Tibial artery (tissue), 4 donors: ENCODE measurements at regions of chr6 and their contacts with region 1.

Region 1: GRCh38 chr6:35240840-35241801 is 18.4 kb upstream of the ZNF76 start:
- DNase-seq: peak; percentile 59 to 83
- H3K4me3 ChIP-seq: no peak overlapping the region
- H3K27ac ChIP-seq: peak overlapping the region; percentile 68 to 80
- H3K4me1 ChIP-seq: peaks cover 0 to 46% (median 31%) of the 10 kb centered on the region in 4 donors
- H3K27me3 ChIP-seq: no peaks in the 10 kb centered on the region
- CTCF ChIP-seq: peak; percentile 94 to 95

Region 2: DNA sequence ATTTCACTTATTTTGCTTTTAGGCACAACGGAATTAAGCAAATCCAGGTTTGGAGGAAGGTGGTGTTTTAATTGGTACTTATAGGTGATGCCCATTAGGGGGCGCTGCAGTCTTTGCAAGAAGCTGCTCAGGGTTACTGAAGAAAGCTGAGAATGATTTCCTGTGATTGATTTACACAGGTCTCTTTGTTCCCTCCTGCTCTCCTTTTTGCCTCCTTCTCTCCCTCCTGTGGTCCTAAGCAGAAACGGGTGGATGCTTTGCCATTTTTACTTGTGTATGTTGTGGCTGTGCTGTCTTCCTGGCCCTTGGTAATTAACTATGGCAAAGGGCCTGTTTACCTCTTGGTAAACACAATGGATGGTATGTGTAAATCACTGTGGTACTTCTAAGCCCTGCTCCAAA is 254.3 kb before region 1 on chr6:
- intact Hi-C with region 1: loop called (anchors 10 kb)
- DNase-seq: peak; percentile 38 to 78
- H3K4me3 ChIP-seq: no peak overlapping the region
- H3K27ac ChIP-seq: no peak overlapping the region
- H3K4me1 ChIP-seq: peaks cover 0 to 11% (median 0%) of the 10 kb centered on the region in 4 donors
- H3K27me3 ChIP-seq: no peaks in the 10 kb centered on the region
- CTCF ChIP-seq: peak; percentile 76 to 92

Region 3: DNA sequence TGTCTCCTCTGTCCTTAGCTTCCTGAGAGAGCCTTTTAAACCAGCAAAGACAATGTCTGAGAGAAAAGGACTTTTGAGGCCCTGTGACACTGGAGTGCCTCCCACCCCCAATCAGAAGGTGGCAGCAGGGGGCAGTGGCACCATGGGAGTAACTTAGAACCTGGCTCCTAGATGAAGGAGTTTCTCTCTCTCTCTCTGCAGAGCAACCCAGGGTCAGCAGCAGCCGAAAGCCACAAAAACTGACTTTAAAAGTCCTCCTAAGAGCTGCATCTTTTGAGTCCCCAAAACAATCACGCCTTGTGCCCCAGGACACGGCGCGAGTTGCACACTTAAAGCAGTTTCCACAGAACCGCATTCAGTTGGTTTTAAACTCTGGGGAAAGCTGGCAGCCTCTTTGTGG is 94.7 kb before region 1 on chr6:
- intact Hi-C with region 1: loop called (anchors 2 kb)
- DNase-seq: peak; percentile 41 to 80
- H3K4me3 ChIP-seq: no peak overlapping the region
- H3K27ac ChIP-seq: peak overlapping the region in 1 of 2 donors; percentile 29
- H3K4me1 ChIP-seq: peaks cover 0 to 29% (median 14%) of the 10 kb centered on the region in 4 donors
- H3K27me3 ChIP-seq: no peaks in the 10 kb centered on the region
- CTCF ChIP-seq: peak; percentile 79 to 80

Region 4: GRCh38 chr6:35209081-35209480 is 32.0 kb before region 1 on chr6:
- intact Hi-C with region 1: loop called (anchors 5 kb)
- DNase-seq: no peak
- H3K4me3 ChIP-seq: no peak overlapping the region
- H3K27ac ChIP-seq: no peak overlapping the region
- H3K4me1 ChIP-seq: peaks cover 3 to 20% (median 11%) of the 10 kb centered on the region in 4 donors
- H3K27me3 ChIP-seq: no peaks in the 10 kb centered on the region
- CTCF ChIP-seq: no peak